Gastrocnemius medialis (tissue), 4 donors: ENCODE measurements at regions of chr13 and their contacts with region 1.

Region 1: GRCh38 chr13:29508130-29508875 is 87.2 kb downstream of the SLC7A1 start:
- DNase-seq: peak; percentile 54 to 73
- ATAC-seq: peak; percentile 80 to 95
- H3K4me3 ChIP-seq: no peak overlapping the region
- H3K27ac ChIP-seq: no peak overlapping the region
- H3K4me1 ChIP-seq: peaks cover 0 to 3% of the 10 kb centered on the region in 2 donors
- H3K27me3 ChIP-seq: peaks cover 16 to 38% (median 18%) of the 10 kb centered on the region in 3 donors
- CTCF ChIP-seq: peak; percentile 77 to 97 (median 88)
- POLR2A ChIP-seq: no peak

Region 2: GRCh38 chr13:29707876-29708543 is 199.7 kb after region 1 on chr13:
- in situ Hi-C with region 1: no loop called
- intact Hi-C with region 1: loop called (anchors 5 kb)
- DNase-seq: no peak
- ATAC-seq: no peak
- H3K4me3 ChIP-seq: no peak overlapping the region
- H3K27ac ChIP-seq: no peak overlapping the region
- H3K4me1 ChIP-seq: peaks cover 0 to 5% of the 10 kb centered on the region in 2 donors
- H3K27me3 ChIP-seq: no peaks in the 10 kb centered on the region
- CTCF ChIP-seq: peak in 1 of 5 experiments; percentile 22
- POLR2A ChIP-seq: no peak

Region 3: GRCh38 chr13:31394491-31394890 is 1886.2 kb after region 1 on chr13:
- in situ Hi-C with region 1: no loop called
- intact Hi-C with region 1: no loop called
- DNase-seq: no peak
- ATAC-seq: no peak
- H3K4me3 ChIP-seq: no peak overlapping the region
- H3K27ac ChIP-seq: no peak overlapping the region
- H3K4me1 ChIP-seq: no peaks in the 10 kb centered on the region
- H3K27me3 ChIP-seq: no peaks in the 10 kb centered on the region
- CTCF ChIP-seq: no peak
- POLR2A ChIP-seq: no peak